ENCODE measurements at regions of chr1 and their contacts with region 1.

Region 1: DNA sequence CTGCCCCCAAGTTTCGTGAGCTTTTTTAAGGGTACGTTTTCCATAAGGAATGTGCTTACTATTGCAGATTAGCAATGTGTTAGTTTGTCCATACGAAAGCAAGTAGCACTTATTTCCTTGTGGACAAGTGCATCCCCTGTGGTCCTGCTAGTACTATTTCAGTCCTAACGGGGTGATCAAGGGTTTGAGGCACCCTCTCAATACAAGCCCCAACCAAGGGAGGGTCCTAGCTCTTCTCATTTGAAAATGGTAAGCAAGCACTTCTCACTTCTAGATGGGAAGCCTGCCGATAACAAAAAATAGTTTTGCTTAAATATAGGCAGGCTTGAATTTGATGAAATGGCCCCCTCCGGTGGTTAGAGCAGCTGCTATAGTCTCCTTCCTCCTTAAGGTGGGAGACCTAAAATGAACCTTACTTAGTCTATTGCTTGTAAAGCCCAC is 64.0 kb upstream of the HMCN1 start:
- DNase-seq: no peak
- H3K4me3 ChIP-seq: no peak overlapping the region
- H3K27ac ChIP-seq: peak overlapping the region in 1 of 8 donors; percentile 7
- H3K4me1 ChIP-seq: peaks cover 10 to 39% (median 25%) of the 10 kb centered on the region in 6 donors
- H3K27me3 ChIP-seq: no peaks in the 10 kb centered on the region
- CTCF ChIP-seq: peak in 10 of 11 experiments; percentile 10 to 71 (median 58)
- POLR2A ChIP-seq: no peak

Region 2: DNA sequence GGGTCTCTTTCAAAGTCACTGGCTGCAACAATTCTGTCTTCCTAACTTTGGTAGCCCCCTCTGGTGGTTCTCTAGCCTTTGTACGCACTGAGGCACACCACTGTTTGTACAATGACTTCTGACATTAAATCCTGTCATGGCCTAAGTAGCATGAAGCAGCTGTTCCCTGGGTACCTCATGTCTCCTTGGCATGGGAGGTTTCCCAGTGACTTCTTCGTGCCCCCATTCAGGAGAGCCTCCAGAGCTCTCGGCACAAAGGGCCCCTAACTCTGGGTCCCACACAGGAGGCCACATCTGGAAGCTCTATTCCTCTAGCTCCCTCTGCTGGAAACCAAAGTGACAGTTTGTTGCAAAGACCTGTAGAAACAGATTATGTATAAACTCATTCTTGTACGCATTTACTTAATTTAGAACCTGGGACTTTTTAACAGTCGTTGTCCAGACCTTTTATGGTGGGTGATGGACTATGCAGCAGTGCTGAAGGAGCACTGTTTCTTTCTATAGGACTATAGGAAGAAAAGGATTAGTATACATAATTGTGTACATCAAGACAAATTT is 499.8 kb before region 1 on chr1:
- intact Hi-C with region 1: loop called (anchors 10 kb)
- DNase-seq: no peak
- H3K4me3 ChIP-seq: no peak overlapping the region
- H3K27ac ChIP-seq: no peak overlapping the region
- H3K4me1 ChIP-seq: peaks cover 0 to 7% (median 0%) of the 10 kb centered on the region in 6 donors
- H3K27me3 ChIP-seq: no peaks in the 10 kb centered on the region
- CTCF ChIP-seq: peak in 10 of 11 experiments; percentile 28 to 68 (median 58)
- POLR2A ChIP-seq: no peak

Region 3: GRCh38 chr1:185864889-185865288 is 194.7 kb after region 1 on chr1:
- intact Hi-C with region 1: no loop called
- DNase-seq: no peak
- H3K4me3 ChIP-seq: no peak overlapping the region
- H3K27ac ChIP-seq: no peak overlapping the region
- H3K4me1 ChIP-seq: no peaks in the 10 kb centered on the region
- H3K27me3 ChIP-seq: no peaks in the 10 kb centered on the region
- CTCF ChIP-seq: no peak
- POLR2A ChIP-seq: no peak

Measured in spleen (tissue), 13 donors.